Activated CD4-positive, alpha-beta T cell treated with anti-CD3 and anti-CD28 coated beads for 36 hours (primary cell): ENCODE measurements at regions of chr1 and their contacts with region 1.

Region 1: GRCh38 chr1:114369927-114370326 is 141.1 kb downstream of the TRIM33 start:
- DNase-seq: no peak
- ATAC-seq: no peak
- H3K4me3 Mint-ChIP-seq: no peak overlapping the region
- H3K27ac Mint-ChIP-seq: no peak overlapping the region
- H3K4me1 Mint-ChIP-seq: no peaks in the 10 kb centered on the region
- H3K27me3 Mint-ChIP-seq: no peaks in the 10 kb centered on the region

Region 2: GRCh38 chr1:114386129-114387009 is 16.4 kb after region 1 on chr1:
- CTCF ChIA-PET with region 1: no interaction called
- POLR2A ChIA-PET with region 1: no interaction called
- intact Hi-C with region 1: no loop called
- DNase-seq: no peak
- ATAC-seq: peak; percentile 44
- H3K4me3 Mint-ChIP-seq: no peak overlapping the region
- H3K27ac Mint-ChIP-seq: no peak overlapping the region
- H3K4me1 Mint-ChIP-seq: peaks cover 4% of the 10 kb centered on the region
- H3K27me3 Mint-ChIP-seq: no peaks in the 10 kb centered on the region

Region 3: DNA sequence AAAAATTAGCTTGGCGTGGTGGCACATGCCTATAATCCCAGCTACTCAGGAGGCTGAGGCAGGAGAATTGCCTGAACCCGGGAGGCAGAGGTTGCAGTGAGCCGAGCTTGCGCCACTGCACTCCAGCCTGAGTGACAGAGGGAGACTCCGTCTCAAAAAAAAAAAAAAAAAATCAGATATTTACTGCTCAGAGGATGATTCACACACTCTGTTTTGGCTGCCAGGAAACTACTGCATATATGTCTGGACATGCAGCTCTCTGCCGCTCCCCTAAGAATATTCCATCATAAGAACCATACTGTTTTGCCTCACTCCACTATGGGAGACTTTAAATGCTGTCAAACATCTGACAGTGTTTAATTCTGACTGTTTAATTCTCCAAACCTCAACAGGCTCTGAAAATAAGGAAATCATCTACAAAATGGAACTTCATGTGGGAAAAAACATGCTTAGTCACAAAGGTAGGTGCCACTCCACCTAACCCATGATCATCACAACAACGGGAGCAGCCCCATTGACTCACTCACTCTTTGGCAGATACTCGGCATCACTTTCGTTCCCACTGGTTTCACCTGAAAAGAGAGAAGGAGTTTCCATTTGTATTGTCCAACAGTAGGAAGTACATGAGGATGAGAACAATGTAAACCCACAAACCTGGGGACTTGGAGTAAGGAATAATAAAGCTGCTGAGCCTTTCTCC is 240.8 kb after region 1 on chr1:
- CTCF ChIA-PET with region 1: no interaction called
- POLR2A ChIA-PET with region 1: no interaction called
- intact Hi-C with region 1: loop called in 1 of 2 experiments (anchors 10 kb)
- DNase-seq: no peak
- ATAC-seq: no peak
- H3K4me3 Mint-ChIP-seq: no peak overlapping the region
- H3K27ac Mint-ChIP-seq: no peak overlapping the region
- H3K4me1 Mint-ChIP-seq: no peaks in the 10 kb centered on the region
- H3K27me3 Mint-ChIP-seq: no peaks in the 10 kb centered on the region

Region 4: GRCh38 chr1:116020668-116021275 is 1650.8 kb after region 1 on chr1:
- CTCF ChIA-PET with region 1: no interaction called
- POLR2A ChIA-PET with region 1: no interaction called
- intact Hi-C with region 1: no loop called
- DNase-seq: peak; percentile 68
- ATAC-seq: peak; percentile 68
- H3K4me3 Mint-ChIP-seq: no peak overlapping the region
- H3K27ac Mint-ChIP-seq: no peak overlapping the region
- H3K4me1 Mint-ChIP-seq: no peaks in the 10 kb centered on the region
- H3K27me3 Mint-ChIP-seq: no peaks in the 10 kb centered on the region